AG04449 (cell line): ENCODE measurements at regions of chr17 and their contacts with region 1.

Region 1: GRCh38 chr17:49997791-49998703 is 3.0 kb upstream of the DLX3 start:
- DNase-seq: peak; percentile 10
- H3K4me3 ChIP-seq: no peak overlapping the region
- CTCF ChIP-seq: peak; percentile 85

Region 2: GRCh38 chr17:49815761-49816281 is 182.2 kb before region 1 on chr17:
- CTCF ChIA-PET with region 1: interaction called, 16 read pairs
- POLR2A ChIA-PET with region 1: no interaction called
- DNase-seq: no peak
- H3K4me3 ChIP-seq: no peak overlapping the region
- CTCF ChIP-seq: no peak

Region 3: GRCh38 chr17:49880291-49881053 is 117.6 kb before region 1 on chr17:
- CTCF ChIA-PET with region 1: interaction called, 232 read pairs
- POLR2A ChIA-PET with region 1: no interaction called
- DNase-seq: no peak
- H3K4me3 ChIP-seq: no peak overlapping the region; the same call in 1 of the 2 replicates
- CTCF ChIP-seq: peak; percentile 95

Region 4: DNA sequence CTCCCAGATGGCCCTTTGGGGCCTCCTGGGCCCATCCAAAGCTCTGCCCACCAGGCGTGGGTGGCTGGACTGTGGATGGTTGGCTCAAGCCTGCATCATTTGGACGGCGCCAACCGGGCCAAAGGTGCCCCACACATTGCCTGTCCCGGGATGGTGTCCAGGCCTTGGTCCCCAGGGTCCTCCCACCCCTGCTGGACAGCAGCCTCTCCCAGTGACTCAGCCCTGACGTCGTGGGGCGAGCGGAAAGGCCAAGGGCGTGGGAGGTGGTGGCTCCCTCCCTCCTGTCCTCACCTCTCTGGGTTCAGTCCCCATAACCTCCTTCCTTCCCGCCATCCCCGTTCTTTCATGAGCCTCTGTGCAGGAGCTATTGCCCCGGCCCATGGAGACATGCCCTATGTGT is 71.2 kb before region 1 on chr17:
- CTCF ChIA-PET with region 1: interaction called, 32 read pairs
- POLR2A ChIA-PET with region 1: no interaction called
- DNase-seq: no peak
- H3K4me3 ChIP-seq: no peak overlapping the region
- CTCF ChIP-seq: no peak

Region 5: DNA sequence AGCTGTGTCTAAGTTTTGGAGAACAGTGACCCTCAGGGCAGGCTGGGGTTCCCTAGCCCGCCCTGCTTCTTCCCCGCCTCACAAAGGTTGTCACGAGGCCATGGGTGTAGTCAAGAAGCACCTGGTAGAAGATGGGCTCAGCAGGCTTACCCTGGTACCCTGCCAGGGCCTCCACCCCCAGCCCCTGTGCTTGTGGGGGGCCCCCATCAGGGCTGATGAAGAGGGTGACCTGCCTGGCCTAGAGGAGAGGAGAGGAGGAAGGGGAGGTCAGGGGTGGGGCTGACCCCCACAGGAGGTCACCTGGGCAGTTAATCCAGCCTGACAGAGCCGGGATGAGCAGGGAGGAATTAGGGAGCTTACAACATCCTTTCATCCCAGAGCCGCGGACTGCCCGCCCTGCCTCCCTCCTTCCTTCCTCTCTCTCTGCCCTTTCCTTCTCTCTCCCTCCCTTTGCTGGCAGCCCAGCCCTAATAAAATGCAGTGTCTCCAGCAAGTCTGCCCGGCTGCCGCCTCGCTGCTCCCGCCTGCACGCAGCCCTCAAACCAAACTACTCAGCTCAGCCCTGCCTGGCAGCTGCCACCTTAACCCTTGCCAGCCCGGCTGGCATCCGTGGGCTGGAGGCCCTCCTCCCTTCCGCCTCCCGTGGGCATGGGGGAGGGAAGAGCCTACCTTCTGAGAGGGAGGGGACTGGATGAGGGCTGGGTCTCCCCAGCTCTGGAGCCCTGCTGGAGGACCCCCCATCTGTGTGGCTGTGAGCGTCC is 10.2 kb before region 1 on chr17:
- CTCF ChIA-PET with region 1: interaction called, 266 read pairs
- POLR2A ChIA-PET with region 1: no interaction called
- DNase-seq: no peak
- H3K4me3 ChIP-seq: no peak overlapping the region
- CTCF ChIP-seq: no peak

Region 6: DNA sequence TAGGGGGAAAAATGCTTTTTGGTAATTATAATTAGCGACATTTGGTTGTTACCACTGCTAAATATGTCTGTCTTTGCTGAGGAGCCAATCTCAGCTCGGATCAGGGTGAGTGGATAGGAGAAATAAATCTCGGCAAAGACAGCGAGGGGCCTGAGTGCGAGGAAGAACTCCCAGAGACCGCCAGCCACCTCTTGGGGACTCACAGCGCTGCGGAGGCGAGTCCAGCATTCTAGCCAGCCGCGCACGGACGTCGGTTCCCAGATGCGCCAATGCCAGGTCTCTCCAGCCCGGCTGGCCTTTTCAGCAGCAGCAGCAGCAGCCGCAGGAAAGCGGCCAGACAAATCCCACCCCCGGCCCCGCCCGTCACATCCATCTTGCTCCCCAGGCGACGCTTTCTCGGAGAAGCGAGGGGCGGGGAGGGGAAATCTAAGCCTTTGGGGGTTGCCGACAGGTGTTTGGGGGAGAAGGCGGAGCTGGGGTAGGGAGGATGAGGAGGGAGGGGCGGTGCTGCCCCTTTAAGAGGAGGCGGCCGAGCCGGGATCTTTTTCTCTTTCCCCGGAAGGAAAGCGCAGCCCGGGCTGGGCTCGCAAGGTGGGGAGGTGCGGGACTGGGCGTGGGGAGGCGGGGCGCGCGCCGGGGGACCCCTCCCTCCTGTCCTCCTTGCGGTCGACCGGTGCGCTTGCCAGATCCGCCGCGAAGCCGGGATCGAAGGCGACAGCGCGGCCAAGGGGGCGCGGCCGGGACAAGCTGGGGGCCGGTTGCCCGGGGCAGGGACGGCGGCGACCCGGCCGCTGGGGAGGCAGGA is 57.6 kb after region 1 on chr17 and contains the start of gene ITGA3:
- CTCF ChIA-PET with region 1: interaction called, 10 read pairs
- POLR2A ChIA-PET with region 1: no interaction called
- DNase-seq: no peak
- H3K4me3 ChIP-seq: peak within 1 kb of the TSS; percentile 78
- CTCF ChIP-seq: no peak